Sigmoid colon (tissue), 7 donors: ENCODE measurements at regions of chr21 and their contacts with region 1.

Region 1: DNA sequence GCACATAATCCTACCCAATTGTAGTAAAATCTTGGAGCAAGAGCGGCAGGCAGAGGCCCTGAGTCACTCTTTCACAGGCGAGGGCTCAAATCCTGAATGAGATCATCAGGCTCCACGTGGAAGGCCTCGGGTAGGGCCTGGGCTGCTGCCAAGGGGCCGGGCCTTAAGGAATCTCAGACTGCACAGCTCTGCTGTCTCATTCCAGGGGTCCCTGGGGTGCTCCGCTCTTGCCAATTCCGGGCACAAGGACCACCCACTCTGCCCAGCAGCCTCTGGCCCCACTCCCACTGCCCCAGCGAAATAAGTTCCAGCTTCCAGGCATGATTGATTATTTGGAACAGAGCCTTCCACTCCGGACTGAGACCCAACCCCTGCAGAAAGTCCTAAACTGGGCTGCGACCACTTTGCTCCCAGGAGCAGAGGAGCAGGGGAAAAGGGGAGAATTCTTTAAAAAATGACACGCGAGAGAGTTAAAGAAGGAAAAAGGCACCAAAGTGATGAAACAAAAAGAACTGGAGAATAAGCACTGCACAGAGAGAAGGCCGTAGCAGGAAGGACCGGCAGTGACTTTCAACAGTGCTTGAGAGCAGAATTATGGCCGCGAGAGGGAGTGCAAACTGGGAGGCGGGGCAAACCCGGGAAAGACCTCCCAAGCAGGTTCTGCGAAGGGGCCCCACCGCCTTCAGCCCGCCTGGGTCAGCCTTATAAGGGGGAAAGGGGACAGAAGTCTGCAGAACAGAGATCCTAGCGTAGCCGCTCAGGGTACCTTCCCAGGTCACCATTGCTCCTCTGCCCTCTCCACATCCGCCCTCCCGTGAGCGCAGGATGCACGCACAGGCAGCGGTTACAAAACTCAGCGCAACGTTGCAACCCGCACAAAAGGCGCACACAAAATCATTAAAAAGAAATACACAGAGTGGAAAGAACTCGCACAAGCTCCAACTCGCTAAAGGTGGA is 2.0 kb downstream of the ADAMTS1 start:
- DNase-seq: peak; percentile 97
- H3K4me3 ChIP-seq: peak overlapping the region; percentile 62 to 81 (median 73)
- H3K27ac ChIP-seq: peak overlapping the region; percentile 91 to 98 (median 92)
- H3K4me1 ChIP-seq: peaks cover 0 to 53% (median 34%) of the 10 kb centered on the region in 4 donors
- H3K27me3 ChIP-seq: no peaks in the 10 kb centered on the region
- CTCF ChIP-seq: peak; percentile 16 to 35 (median 28)
- EP300 ChIP-seq: peak in 1 of 4 donors; percentile 69
- POLR2A ChIP-seq: no peak

Region 2: DNA sequence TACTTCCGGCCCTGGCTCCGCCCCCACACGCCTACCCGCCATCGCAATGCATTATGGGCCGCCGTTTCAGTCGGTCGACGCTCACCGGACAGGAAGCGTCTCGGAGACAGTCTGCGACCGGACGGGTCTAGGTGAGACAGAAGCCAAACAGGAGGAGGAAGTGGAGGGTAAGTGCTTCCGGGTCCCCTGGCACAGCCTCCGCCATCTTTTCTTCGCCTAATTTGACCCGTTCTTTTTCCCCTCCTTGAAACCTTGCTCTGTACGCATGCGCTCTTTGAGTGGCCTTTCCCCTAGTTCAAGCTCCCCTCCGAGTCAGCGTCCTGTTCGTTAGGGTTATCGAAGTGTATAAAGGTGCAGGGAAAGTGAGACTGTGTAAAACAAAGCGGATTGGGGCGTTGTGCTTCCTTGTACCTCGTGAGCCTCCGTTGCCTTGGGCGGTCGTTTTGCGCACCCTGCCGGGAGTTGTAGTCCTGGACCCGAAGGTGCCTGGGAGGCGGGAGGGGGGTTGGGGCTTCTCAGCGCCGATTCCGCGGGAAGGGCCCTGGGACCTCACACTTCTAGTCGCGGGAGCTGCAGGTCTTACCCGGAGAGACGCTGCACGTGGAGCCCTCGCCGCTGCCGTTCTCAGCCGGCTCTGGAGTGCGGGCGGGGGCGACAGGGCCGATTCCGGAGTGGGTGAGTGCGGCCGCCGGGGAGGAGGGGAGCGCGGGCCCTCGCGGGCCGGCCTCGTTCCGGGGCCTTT is 1108.2 kb before region 1 on chr21 and contains the starts of genes ATP5PF and GABPA:
- intact Hi-C with region 1: loop called (anchors 10 kb)
- DNase-seq: peak; percentile 99
- H3K4me3 ChIP-seq: peak within 1 kb of the TSS; percentile 81 to 98 (median 85)
- H3K27ac ChIP-seq: peak within 1 kb of the TSS; percentile 94 to 99 (median 98)
- H3K4me1 ChIP-seq: peaks cover 0 to 55% (median 43%) of the 10 kb centered on the region in 4 donors
- H3K27me3 ChIP-seq: no peaks in the 10 kb centered on the region
- CTCF ChIP-seq: no peak
- EP300 ChIP-seq: peak in 1 of 4 donors; percentile 47
- POLR2A ChIP-seq: no peak
- total RNA-seq, gene ATP5PF: 232 to 283 (median 239) TPM
- total RNA-seq, gene GABPA: 17.6 to 32.5 (median 27.2) TPM

Region 3: DNA sequence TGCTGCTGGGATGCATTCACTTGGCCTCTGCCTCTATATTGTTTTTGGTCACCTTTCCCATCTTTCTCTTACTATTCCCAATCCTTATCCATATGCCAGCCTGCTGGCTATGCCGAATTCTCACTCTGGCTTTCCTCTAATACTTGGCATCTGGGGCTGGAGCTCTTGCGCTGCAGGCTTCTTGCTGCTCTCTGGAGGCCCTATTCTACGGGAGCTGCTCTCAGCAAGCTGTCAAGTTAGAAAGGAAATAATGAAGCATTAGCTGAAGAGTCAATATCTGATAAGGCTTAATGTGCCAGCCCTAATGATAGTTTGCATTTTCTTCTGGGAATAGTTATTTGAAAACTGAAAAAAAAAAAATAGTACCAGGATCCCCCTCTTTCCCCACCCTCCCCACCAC is 144.8 kb before region 1 on chr21:
- intact Hi-C with region 1: no loop called
- DNase-seq: no peak
- H3K4me3 ChIP-seq: no peak overlapping the region
- H3K27ac ChIP-seq: no peak overlapping the region
- H3K4me1 ChIP-seq: no peaks in the 10 kb centered on the region
- H3K27me3 ChIP-seq: no peaks in the 10 kb centered on the region
- CTCF ChIP-seq: no peak
- EP300 ChIP-seq: no peak
- POLR2A ChIP-seq: no peak

Region 4: DNA sequence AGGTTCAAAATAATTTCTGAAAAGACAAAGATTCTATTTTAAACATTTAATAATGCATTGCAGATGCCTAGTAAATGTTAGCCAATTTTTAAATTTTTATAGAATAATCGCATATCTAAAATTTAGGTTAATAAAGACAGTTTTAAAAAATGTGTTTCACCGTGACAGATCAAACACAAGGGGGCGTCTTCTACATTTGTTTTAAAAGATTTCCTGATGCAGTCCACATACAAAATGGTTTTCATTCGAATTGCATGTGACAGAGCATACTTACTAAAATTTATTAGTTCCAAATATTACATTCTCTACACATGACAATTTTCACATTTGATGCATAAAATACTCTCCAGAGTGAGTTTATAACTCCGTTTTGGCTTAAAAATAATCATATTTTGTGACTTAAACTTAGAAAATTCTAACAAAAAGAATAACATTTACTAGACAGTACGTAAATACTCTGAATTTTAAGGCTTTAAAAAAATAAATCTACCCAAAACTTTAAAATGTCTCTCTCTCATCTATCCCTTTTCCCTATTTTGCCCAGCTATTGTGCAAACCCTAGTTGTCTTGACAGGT is 73.6 kb before region 1 on chr21:
- intact Hi-C with region 1: loop called (anchors 2 kb)
- DNase-seq: no peak
- H3K4me3 ChIP-seq: no peak overlapping the region
- H3K27ac ChIP-seq: no peak overlapping the region
- H3K4me1 ChIP-seq: no peaks in the 10 kb centered on the region
- H3K27me3 ChIP-seq: no peaks in the 10 kb centered on the region
- CTCF ChIP-seq: peak in 3 of 4 experiments; percentile 31 to 58 (median 31)
- EP300 ChIP-seq: no peak
- POLR2A ChIP-seq: no peak

Region 5: DNA sequence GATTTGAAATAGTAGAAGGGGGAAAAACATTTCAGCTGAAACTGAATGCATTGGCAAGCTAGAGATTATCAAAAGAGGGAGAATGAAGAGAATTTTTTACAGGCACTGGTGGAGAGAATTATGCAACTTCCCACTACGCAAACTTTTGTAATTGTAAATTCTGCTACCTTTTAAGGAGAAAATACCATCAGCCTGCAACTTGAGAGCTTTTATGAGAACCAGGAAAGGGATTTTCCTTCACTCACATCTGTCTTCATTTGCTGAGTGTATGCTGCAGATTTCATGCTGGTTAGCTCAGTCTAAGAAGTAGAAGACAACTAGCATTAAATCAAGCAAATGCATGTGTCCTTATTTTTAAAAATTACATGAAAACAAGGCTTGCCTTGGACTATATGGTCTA is 41.7 kb before region 1 on chr21:
- intact Hi-C with region 1: loop called (anchors 5 kb)
- DNase-seq: no peak
- H3K4me3 ChIP-seq: no peak overlapping the region
- H3K27ac ChIP-seq: peak overlapping the region; percentile 63 to 76 (median 66)
- H3K4me1 ChIP-seq: peaks cover 0 to 27% (median 10%) of the 10 kb centered on the region in 4 donors
- H3K27me3 ChIP-seq: no peaks in the 10 kb centered on the region
- CTCF ChIP-seq: no peak
- EP300 ChIP-seq: peak in 2 of 4 donors; percentile 13 to 17
- POLR2A ChIP-seq: no peak

Region 6: DNA sequence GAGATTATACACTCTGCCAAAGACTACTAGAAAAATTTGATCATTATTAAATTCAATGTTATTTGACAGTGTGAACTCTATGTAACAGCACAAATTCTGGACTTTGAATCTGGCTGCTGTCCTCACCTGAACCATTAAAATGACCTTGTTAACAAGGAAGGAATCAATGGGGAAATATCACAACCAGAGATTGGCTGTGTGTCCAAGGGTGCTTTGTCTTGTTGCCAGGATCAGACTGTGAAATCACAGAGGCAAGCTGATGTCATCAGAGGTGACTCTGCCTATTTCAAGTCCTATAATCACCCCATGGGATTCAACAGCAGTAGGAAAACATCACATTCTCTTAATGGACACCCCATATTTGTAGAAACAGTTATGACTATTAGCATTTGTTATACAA is 76.8 kb after region 1 on chr21:
- intact Hi-C with region 1: no loop called
- DNase-seq: no peak
- H3K4me3 ChIP-seq: no peak overlapping the region
- H3K27ac ChIP-seq: no peak overlapping the region
- H3K4me1 ChIP-seq: no peaks in the 10 kb centered on the region
- H3K27me3 ChIP-seq: no peaks in the 10 kb centered on the region
- CTCF ChIP-seq: no peak
- EP300 ChIP-seq: no peak
- POLR2A ChIP-seq: no peak

Region 7: DNA sequence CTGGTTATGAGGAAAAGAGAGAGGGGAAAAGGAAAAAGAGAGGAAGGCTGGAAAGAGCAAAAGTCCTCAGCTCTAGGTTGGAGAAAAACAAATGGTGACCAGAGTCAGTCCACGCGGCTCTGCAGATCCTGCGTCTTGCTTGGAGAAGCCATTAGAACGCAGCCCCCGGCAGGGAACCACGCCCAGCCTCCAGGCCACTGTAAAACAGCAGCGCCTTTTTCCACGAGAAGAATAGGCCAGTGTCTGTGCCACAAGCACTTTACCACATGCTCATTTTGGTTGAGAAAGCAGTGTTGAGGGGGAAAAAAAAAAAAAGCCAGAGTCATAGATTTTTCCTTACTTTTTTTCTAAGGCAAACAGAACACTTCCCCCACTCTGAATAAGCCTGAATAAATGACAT is 970.5 kb after region 1 on chr21:
- intact Hi-C with region 1: loop called (anchors 10 kb)
- DNase-seq: peak; percentile 79
- H3K4me3 ChIP-seq: no peak overlapping the region
- H3K27ac ChIP-seq: peak overlapping the region; percentile 33 to 63 (median 50)
- H3K4me1 ChIP-seq: peaks cover 0 to 39% (median 26%) of the 10 kb centered on the region in 4 donors
- H3K27me3 ChIP-seq: no peaks in the 10 kb centered on the region
- CTCF ChIP-seq: no peak
- EP300 ChIP-seq: no peak
- POLR2A ChIP-seq: no peak